ENCODE measurements at regions of chr10 and their contacts with region 1.

Region 1: GRCh38 chr10:30284865-30285594 is 64.0 kb downstream of the MTPAP start:
- DNase-seq: no peak
- ATAC-seq: peak; percentile 96
- H3K4me3 ChIP-seq: no peak overlapping the region
- H3K27ac ChIP-seq: no peak overlapping the region
- H3K4me1 ChIP-seq: peaks cover 2% of the 10 kb centered on the region; the same call in 1 of the 2 replicates
- H3K27me3 ChIP-seq: peaks cover 10% of the 10 kb centered on the region
- CTCF ChIP-seq: no peak
- POLR2A ChIP-seq: no peak
- RAD21 ChIP-seq: no peak

Region 2: GRCh38 chr10:30034433-30035137 is 250.4 kb before region 1 on chr10:
- CTCF ChIA-PET with region 1: no interaction called
- POLR2A ChIA-PET with region 1: no interaction called
- dilution Hi-C with region 1: no loop called
- in situ Hi-C with region 1: no loop called
- intact Hi-C with region 1: no loop called
- DNase-seq: no peak
- ATAC-seq: no peak
- H3K4me3 ChIP-seq: no peak overlapping the region
- H3K27ac ChIP-seq: no peak overlapping the region
- H3K4me1 ChIP-seq: peaks cover 4% of the 10 kb centered on the region
- H3K27me3 ChIP-seq: no peaks in the 10 kb centered on the region
- CTCF ChIP-seq: no peak
- POLR2A ChIP-seq: no peak
- RAD21 ChIP-seq: no peak

Region 3: GRCh38 chr10:30270247-30270646 is 14.8 kb before region 1 on chr10:
- CTCF ChIA-PET with region 1: interaction called, 5 read pairs
- POLR2A ChIA-PET with region 1: interaction called, 10 read pairs
- dilution Hi-C with region 1: no loop called
- in situ Hi-C with region 1: no loop called
- intact Hi-C with region 1: no loop called
- DNase-seq: peak; percentile 13
- ATAC-seq: 0 out of 2 replicates have a peak, but pooled peaks have one; percentile 59
- H3K4me3 ChIP-seq: no peak overlapping the region
- H3K27ac ChIP-seq: no peak overlapping the region
- H3K4me1 ChIP-seq: no peaks in the 10 kb centered on the region; the same call in 1 of the 2 replicates
- H3K27me3 ChIP-seq: peaks cover 11% of the 10 kb centered on the region
- CTCF ChIP-seq: peak; percentile 36
- POLR2A ChIP-seq: no peak
- RAD21 ChIP-seq: peak; percentile 9; the same call in 1 of the 2 replicates